Colonic mucosa (tissue), 4 donors: ENCODE measurements at regions of chr17 and their contacts with region 1.

Region 1: DNA sequence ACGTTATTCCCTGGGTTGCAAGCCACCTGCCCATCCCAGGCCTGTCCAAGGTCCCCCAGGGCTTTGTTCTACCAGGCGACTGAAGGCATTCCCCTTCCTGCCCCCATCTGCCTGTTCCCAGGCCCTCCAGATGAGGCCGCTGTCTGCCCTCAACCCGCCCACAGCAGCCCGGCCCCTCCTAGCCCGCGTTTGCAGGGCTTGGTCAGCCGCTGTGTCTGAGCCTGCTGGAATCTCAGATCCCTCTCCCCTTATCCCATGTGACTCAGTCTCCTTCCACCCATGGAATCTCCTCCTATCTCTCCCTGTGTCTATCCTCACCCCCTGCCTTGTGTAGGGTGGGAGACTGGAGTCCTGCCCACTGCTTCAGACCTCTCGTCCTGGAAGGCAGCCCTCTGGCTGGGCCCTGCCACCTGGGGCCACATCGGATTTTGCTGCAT is 186.0 kb upstream of the TNRC6C start:
- DNase-seq: peak; percentile 65
- H3K4me3 ChIP-seq: no peak overlapping the region
- H3K27ac ChIP-seq: no peak overlapping the region
- H3K4me1 ChIP-seq: no peaks in the 10 kb centered on the region
- H3K27me3 ChIP-seq: no peaks in the 10 kb centered on the region
- CTCF ChIP-seq: peak; percentile 82

Region 2: GRCh38 chr17:77892469-77893143 is 120.1 kb after region 1 on chr17:
- intact Hi-C with region 1: loop called (anchors 10 kb)
- DNase-seq: no peak
- H3K4me3 ChIP-seq: no peak overlapping the region
- H3K27ac ChIP-seq: no peak overlapping the region
- H3K4me1 ChIP-seq: no peaks in the 10 kb centered on the region
- H3K27me3 ChIP-seq: peaks cover 5% of the 10 kb centered on the region
- CTCF ChIP-seq: no peak

Region 3: DNA sequence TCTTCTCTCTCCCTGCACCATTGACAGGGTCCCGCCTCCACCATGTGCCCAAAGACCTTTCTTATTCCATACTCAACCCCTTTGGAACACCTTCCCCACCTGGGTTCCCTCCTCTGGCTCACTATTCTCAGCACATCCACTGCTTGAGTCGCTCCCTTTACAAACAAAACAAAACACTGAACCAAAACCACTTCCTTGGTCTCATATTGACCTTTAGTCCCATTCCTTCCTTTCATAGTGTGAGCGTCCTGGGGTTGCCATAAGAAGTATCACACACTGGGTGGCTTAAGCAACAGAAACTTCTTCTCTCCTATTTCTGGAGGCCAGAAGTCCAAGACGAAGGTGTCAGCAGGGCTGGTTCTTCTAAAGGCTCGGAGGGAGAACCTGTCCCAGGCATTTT is 179.9 kb after region 1 on chr17:
- intact Hi-C with region 1: loop called (anchors 5 kb)
- DNase-seq: no peak
- H3K4me3 ChIP-seq: no peak overlapping the region
- H3K27ac ChIP-seq: no peak overlapping the region
- H3K4me1 ChIP-seq: no peaks in the 10 kb centered on the region
- H3K27me3 ChIP-seq: no peaks in the 10 kb centered on the region
- CTCF ChIP-seq: no peak